ENCODE measurements at regions of chr4 and their contacts with region 1.

Region 1: GRCh38 chr4:159201168-159201567 is 98.3 kb downstream of the RAPGEF2 start:
- DNase-seq: no peak
- H3K4me3 ChIP-seq: no peak overlapping the region
- H3K27ac ChIP-seq: peak overlapping the region in 1 of 2 experiments; percentile 10
- H3K4me1 ChIP-seq: peaks cover 3 to 68% (median 29%) of the 10 kb centered on the region in 4 experiments
- H3K27me3 ChIP-seq: no peaks in the 10 kb centered on the region

Region 2: GRCh38 chr4:158710814-158711213 is 490.4 kb before region 1 on chr4:
- CTCF ChIA-PET with region 1: interaction called, 13 read pairs
- POLR2A ChIA-PET with region 1: no interaction called
- DNase-seq: peak; percentile 31 to 47 (median 42)
- H3K4me3 ChIP-seq: no peak overlapping the region
- H3K27ac ChIP-seq: no peak overlapping the region
- H3K4me1 ChIP-seq: no peaks in the 10 kb centered on the region
- H3K27me3 ChIP-seq: no peaks in the 10 kb centered on the region

Region 3: GRCh38 chr4:159175085-159175988 is 25.8 kb before region 1 on chr4:
- CTCF ChIA-PET with region 1: interaction called, 18 read pairs
- POLR2A ChIA-PET with region 1: no interaction called
- DNase-seq: peak; percentile 88 to 94 (median 93)
- H3K4me3 ChIP-seq: peak overlapping the region in 5 of 7 experiments; percentile 16 to 69 (median 36)
- H3K27ac ChIP-seq: peak overlapping the region; percentile 30 to 72
- H3K4me1 ChIP-seq: peaks cover 26 to 82% (median 63%) of the 10 kb centered on the region in 4 experiments
- H3K27me3 ChIP-seq: no peaks in the 10 kb centered on the region

Measured in common myeloid progenitor, CD34-positive (primary cell).